Upper lobe of right lung (tissue), 1 donor: ENCODE measurements at regions of chr9 and their contacts with region 1.

Region 1: DNA sequence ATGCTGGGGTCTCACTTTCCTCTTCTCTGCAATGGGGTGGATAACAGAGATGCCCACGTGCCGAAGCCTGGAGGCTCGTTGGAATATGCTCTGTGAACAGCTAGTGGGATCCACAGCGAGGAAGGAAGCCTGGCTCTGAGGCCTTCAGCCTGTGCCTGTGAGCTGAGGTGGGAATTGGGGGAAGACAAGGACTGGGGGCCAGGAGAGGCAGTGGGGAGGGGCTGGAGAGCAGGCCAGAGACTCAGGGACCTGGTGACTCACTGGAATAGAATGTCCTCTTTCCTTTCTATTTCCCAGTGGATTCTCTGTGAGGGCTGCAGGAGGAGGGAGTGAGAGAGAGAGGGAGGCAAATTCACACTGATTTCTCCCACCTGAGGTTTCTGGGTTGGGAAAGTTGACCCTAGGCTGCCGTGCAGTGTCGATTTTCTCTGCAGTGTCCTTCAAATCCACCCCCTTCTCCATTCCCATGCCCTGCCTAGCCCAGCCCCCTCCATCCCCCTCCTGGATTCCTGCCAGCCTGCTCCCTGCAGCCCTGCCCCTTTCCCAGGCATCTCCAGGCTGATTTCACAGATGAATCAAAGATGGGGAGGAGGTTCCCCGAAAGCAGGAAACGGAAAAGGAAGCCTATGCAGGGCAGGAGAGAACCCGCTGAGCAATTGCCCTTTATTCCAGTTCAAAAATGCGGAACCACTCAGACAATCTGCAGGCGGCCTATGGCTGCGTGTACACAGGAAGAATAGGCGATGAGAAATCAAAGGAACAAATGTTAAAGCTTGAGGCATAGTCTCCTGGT is 1.4 kb upstream of the SPAAR start:
- DNase-seq: peak; percentile 79
- ATAC-seq: peak; percentile 49
- H3K4me3 ChIP-seq: peak overlapping the region; percentile 32
- H3K27ac ChIP-seq: peak overlapping the region; percentile 97
- H3K4me1 ChIP-seq: peaks cover 85% of the 10 kb centered on the region
- H3K27me3 ChIP-seq: no peaks in the 10 kb centered on the region
- CTCF ChIP-seq: no peak

Region 2: GRCh38 chr9:35945341-35946018 is 37.6 kb after region 1 on chr9:
- intact Hi-C with region 1: loop called (anchors 5 kb)
- DNase-seq: peak; percentile 86
- ATAC-seq: peak; percentile 80
- H3K4me3 ChIP-seq: peak overlapping the region; percentile 11
- H3K27ac ChIP-seq: peak overlapping the region; percentile 60
- H3K4me1 ChIP-seq: peaks cover 28% of the 10 kb centered on the region
- H3K27me3 ChIP-seq: no peaks in the 10 kb centered on the region
- CTCF ChIP-seq: peak; percentile 83

Region 3: GRCh38 chr9:35981699-35982098 is 73.8 kb after region 1 on chr9:
- intact Hi-C with region 1: no loop called
- DNase-seq: no peak
- ATAC-seq: no peak
- H3K4me3 ChIP-seq: no peak overlapping the region
- H3K27ac ChIP-seq: no peak overlapping the region
- H3K4me1 ChIP-seq: no peaks in the 10 kb centered on the region
- H3K27me3 ChIP-seq: peaks cover 6% of the 10 kb centered on the region
- CTCF ChIP-seq: no peak

Region 4: DNA sequence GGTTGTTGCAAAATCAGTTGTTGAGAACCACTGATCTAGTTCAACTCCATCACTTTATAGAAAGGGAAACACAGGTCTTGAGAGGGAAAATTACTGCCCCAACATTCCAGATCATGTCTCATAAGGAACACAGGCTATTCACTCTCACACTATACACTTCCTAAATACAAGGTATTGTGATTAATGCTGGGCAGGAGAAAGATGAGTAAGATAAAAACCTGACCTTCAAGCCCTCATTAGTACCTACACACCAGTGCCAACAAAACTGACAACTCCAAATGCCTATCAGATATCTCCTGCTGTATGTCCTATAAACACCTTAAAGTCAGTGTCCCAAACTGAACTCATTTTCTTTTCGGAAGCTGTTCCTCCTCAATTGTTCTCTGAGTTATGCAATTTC is 342.2 kb after region 1 on chr9:
- intact Hi-C with region 1: no loop called
- DNase-seq: no peak
- ATAC-seq: no peak
- H3K4me3 ChIP-seq: no peak overlapping the region
- H3K27ac ChIP-seq: no peak overlapping the region
- H3K4me1 ChIP-seq: no peaks in the 10 kb centered on the region
- H3K27me3 ChIP-seq: no peaks in the 10 kb centered on the region
- CTCF ChIP-seq: no peak